PC-9 (cell line): ENCODE measurements at regions of chr12 and their contacts with region 1.

Region 1: DNA sequence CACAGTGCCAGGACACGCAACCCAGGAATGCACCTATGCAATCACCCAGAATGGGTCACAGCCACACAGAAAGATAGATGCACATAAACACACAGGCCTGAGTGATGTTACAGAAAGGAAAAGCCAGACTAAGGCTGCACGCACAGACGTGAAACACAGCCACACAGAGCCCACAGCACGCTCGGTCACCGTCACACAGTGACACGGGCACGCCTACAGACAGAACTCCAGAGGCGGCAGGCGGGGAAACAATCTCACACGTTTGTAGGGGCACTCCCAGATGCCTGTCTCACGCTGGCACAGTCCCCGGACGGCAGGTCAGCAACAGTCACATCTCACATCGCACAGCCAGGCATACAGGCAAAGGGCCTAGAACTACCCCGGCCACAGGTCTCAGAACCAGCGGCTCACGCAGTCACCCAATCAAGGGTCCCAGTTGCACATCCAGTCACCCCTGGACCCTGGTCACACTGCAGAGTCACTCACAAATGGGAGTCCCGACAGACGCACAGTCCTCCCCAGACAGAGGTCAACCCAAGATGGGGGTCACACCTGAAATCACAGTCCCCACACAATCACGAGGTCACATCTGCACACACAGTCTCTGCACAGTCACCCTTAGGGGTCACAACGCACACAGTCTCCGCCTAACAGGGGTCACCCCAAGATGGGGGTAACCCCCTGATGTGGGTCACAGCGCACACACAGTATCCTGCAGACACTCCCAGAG is 790 bp downstream of the SSH1 start:
- DNase-seq: peak; percentile 55 to 65
- H3K4me3 ChIP-seq: peak overlapping the region; percentile 98
- H3K27ac ChIP-seq: peak overlapping the region; percentile 92
- H3K4me1 ChIP-seq: peaks cover 41% of the 10 kb centered on the region
- H3K27me3 ChIP-seq: no peaks in the 10 kb centered on the region
- CTCF ChIP-seq: no peak

Region 2: DNA sequence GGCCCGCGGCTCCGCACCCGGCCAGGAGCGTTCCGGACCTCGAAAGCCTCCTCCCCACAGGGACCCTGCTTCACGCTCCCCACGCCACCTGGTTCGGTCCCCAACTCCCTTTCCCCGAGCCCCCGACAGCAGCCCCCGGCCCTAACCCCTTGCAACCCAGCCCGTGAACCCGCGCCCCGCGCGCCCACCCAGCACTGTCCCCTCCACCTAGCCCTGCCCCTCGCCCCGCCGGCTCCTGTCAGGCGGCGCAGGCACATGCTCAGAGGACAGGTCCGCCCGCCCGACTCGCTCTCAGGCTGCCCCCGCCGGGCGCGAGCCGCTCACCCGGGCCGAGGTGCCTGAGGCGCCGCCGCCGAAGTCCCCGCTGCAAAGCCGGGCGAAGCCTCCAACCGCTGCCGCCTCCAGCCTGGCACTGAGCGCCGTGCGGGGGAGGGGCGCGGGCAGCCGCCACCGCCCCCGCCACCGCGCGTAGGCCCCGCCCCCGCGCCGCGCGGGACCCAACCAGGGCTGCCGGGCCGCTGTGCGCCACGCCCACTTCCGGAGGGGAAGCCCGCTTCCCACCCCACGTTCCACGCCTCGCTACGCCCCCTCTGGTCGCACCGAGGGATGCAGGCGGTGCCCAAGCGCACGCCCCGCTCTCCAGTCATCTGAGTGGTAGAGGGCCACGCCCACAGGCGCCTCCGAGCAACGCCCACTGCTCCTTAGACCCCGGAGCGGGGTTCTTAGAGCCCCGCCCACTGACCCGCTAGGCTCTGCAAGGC is 125.3 kb before region 1 on chr12 and contains the start of gene CORO1C:
- CTCF ChIA-PET with region 1: no interaction called
- POLR2A ChIA-PET with region 1: no interaction called
- intact Hi-C with region 1: loop called (anchors 5 kb)
- DNase-seq: peak; percentile 85 to 98
- H3K4me3 ChIP-seq: peak within 1 kb of the TSS; percentile 85
- H3K27ac ChIP-seq: peak within 1 kb of the TSS; percentile 84
- H3K4me1 ChIP-seq: peaks cover 46% of the 10 kb centered on the region
- H3K27me3 ChIP-seq: no peaks in the 10 kb centered on the region
- CTCF ChIP-seq: peak; percentile 80
- total RNA-seq, gene CORO1C: 122 and 139 TPM in 2 replicates

Region 3: GRCh38 chr12:108833355-108833733 is 23.2 kb before region 1 on chr12:
- CTCF ChIA-PET with region 1: interaction called, 3 read pairs
- POLR2A ChIA-PET with region 1: interaction called, 7 read pairs
- intact Hi-C with region 1: loop called (anchors 1 kb)
- DNase-seq: peak; percentile 88 to 92
- H3K4me3 ChIP-seq: peak overlapping the region; percentile 31; the same call in 1 of the 2 replicates
- H3K27ac ChIP-seq: peak overlapping the region; percentile 93
- H3K4me1 ChIP-seq: peaks cover 45% of the 10 kb centered on the region
- H3K27me3 ChIP-seq: no peaks in the 10 kb centered on the region
- CTCF ChIP-seq: no peak

Region 4: GRCh38 chr12:108950991-108951739 is 94.6 kb after region 1 on chr12:
- CTCF ChIA-PET with region 1: no interaction called
- POLR2A ChIA-PET with region 1: no interaction called
- intact Hi-C with region 1: loop called (anchors 2 kb)
- DNase-seq: peak; percentile 41 to 73
- H3K4me3 ChIP-seq: no peak overlapping the region
- H3K27ac ChIP-seq: no peak overlapping the region
- H3K4me1 ChIP-seq: no peaks in the 10 kb centered on the region
- H3K27me3 ChIP-seq: peaks cover 30% of the 10 kb centered on the region
- CTCF ChIP-seq: peak; percentile 97